ENCODE measurements at regions of chr5 and their contacts with region 1.

Region 1: GRCh38 chr5:134289509-134290113 is 63.7 kb upstream of the PPP2CA start:
- DNase-seq: peak; percentile 66
- H3K4me3 ChIP-seq: no peak overlapping the region
- H3K27ac ChIP-seq: no peak overlapping the region
- H3K4me1 ChIP-seq: no peaks in the 10 kb centered on the region
- H3K27me3 ChIP-seq: no peaks in the 10 kb centered on the region
- CTCF ChIP-seq: peak; percentile 47 to 81 (median 70)
- EP300 ChIP-seq: no peak
- POLR2A ChIP-seq: no peak

Region 2: GRCh38 chr5:134184155-134185135 is 105.2 kb before region 1 on chr5:
- intact Hi-C with region 1: loop called (anchors 1 kb)
- DNase-seq: peak; percentile 76
- H3K4me3 ChIP-seq: no peak overlapping the region
- H3K27ac ChIP-seq: no peak overlapping the region
- H3K4me1 ChIP-seq: peaks cover 0 to 5% (median 0%) of the 10 kb centered on the region in 4 donors
- H3K27me3 ChIP-seq: no peaks in the 10 kb centered on the region
- CTCF ChIP-seq: peak; percentile 84 to 93 (median 88)
- EP300 ChIP-seq: no peak
- POLR2A ChIP-seq: no peak

Measured in sigmoid colon (tissue), 7 donors.